Calu3 (cell line): ENCODE measurements at regions of chr6 and their contacts with region 1.

Region 1: GRCh38 chr6:33118525-33119123 is 42.8 kb downstream of the HLA-DPB1 start:
- DNase-seq: peak; percentile 41
- H3K4me3 Mint-ChIP-seq: no peak overlapping the region
- H3K27ac Mint-ChIP-seq: no peak overlapping the region
- H3K4me1 Mint-ChIP-seq: no peaks in the 10 kb centered on the region
- H3K27me3 Mint-ChIP-seq: peaks cover 90% of the 10 kb centered on the region
- CTCF ChIP-seq: peak; percentile 86

Region 2: DNA sequence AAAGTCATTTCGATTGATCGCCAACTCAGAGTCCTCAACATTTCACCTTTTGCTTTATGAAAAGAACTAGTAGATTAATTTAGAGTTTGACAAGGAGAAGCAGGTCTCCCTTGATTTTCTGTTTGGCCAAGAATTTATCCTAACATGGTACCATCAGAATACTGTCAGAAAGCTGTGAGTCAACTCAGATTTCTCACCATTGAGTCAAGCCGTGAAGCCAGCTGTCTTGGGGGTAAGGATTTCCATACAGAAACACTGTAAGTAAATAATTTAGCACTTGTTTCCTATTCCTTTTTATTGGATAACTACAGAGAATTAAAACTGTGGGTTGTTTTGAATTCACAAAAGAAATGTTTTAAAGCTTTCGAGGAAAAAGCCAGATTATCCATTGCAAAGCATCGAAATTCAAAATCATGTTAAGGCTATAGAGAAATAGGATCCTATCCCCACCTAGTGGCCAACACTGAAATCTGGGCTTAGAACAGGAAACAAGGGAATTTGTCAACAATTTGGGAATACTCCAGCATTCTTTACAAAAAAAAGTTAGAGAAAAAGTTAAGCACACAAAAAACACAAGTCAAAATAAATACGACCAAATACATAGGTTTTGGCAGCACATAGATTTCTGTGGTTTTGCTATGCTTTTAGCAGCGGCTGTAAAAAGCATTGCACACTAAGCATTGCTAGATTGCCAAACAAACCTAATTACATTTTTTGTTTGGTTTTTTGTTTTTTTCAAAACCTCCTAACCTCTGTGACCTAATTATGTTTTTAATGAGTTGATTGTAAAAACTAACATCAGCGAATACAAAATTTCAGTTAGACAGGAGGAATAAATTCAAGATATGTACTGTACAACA is 29.4 kb after region 1 on chr6:
- CTCF ChIA-PET with region 1: interaction called, 3 read pairs
- intact Hi-C with region 1: loop called (anchors 2 kb)
- DNase-seq: peak; percentile 48
- H3K4me3 Mint-ChIP-seq: no peak overlapping the region
- H3K27ac Mint-ChIP-seq: no peak overlapping the region
- H3K4me1 Mint-ChIP-seq: no peaks in the 10 kb centered on the region
- H3K27me3 Mint-ChIP-seq: peaks cover 59% of the 10 kb centered on the region
- CTCF ChIP-seq: peak; percentile 76

Region 3: GRCh38 chr6:33161354-33162331 is 43.0 kb after region 1 on chr6:
- CTCF ChIA-PET with region 1: no interaction called
- intact Hi-C with region 1: loop called (anchors 5 kb)
- DNase-seq: peak; percentile 93
- H3K4me3 Mint-ChIP-seq: peak overlapping the region; percentile 81
- H3K27ac Mint-ChIP-seq: peak overlapping the region; percentile 9
- H3K4me1 Mint-ChIP-seq: peaks cover 16% of the 10 kb centered on the region
- H3K27me3 Mint-ChIP-seq: peaks cover 77% of the 10 kb centered on the region
- CTCF ChIP-seq: peak; percentile 97